ENCODE measurements at regions of chr6 and their contacts with region 1.

Region 1: GRCh38 chr6:53484476-53485280 is 60.2 kb downstream of the GCLC start:
- DNase-seq: peak; percentile 82
- H3K4me3 ChIP-seq: no peak overlapping the region
- H3K27ac ChIP-seq: peak overlapping the region in 1 of 2 donors; percentile 1
- H3K4me1 ChIP-seq: no peaks in the 10 kb centered on the region
- H3K27me3 ChIP-seq: no peaks in the 10 kb centered on the region
- CTCF ChIP-seq: peak; percentile 82 to 97 (median 90)
- POLR2A ChIP-seq: no peak

Region 2: GRCh38 chr6:53171605-53172446 is 312.9 kb before region 1 on chr6:
- intact Hi-C with region 1: loop called (anchors 1 kb)
- DNase-seq: peak; percentile 82
- H3K4me3 ChIP-seq: no peak overlapping the region
- H3K27ac ChIP-seq: no peak overlapping the region
- H3K4me1 ChIP-seq: no peaks in the 10 kb centered on the region
- H3K27me3 ChIP-seq: no peaks in the 10 kb centered on the region
- CTCF ChIP-seq: peak; percentile 100
- POLR2A ChIP-seq: no peak

Region 3: DNA sequence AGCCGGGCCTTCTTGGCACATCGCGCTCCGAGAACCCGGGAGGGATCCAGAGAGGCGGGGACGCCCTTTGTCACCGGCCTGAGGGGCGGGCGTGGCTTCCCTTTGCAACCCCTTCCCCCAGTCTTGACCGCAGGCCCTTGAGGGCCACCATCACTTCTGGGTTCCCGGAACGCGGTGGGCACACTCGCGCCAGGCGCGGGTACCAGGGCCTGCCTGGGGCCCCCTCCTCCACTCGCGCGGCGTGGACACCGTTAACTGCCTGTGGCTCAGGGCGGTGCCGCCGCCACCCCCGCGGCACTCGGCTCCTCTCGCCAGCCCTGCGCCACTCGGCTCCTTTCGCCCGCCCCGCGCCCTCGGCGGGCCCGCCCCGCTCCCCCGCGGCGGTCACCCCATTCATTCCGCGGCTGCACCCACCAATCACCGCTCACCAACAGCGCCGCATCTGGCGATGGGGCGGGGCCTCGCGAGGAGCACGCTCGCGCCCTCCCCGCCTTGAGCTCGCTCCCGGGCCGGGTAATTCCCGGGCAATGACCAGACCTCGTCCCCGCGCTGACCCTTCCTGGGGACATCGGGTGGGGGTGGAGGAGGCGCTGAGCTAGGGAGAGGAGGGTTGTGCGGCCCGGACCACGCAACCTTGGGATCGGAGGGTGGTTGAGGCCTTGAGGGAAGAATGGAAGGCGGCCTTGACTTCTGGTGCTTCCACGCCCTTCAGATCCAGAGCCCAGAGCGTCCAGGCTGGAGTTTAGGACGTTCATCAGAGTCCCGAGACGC is 125.4 kb before region 1 on chr6:
- intact Hi-C with region 1: loop called (anchors 10 kb)
- DNase-seq: peak; percentile 94
- H3K4me3 ChIP-seq: peak overlapping the region; percentile 58 to 64
- H3K27ac ChIP-seq: peak overlapping the region; percentile 91 to 95
- H3K4me1 ChIP-seq: no peaks in the 10 kb centered on the region
- H3K27me3 ChIP-seq: no peaks in the 10 kb centered on the region
- CTCF ChIP-seq: no peak
- POLR2A ChIP-seq: peak; percentile 78